Common myeloid progenitor, CD34-positive (primary cell): ENCODE measurements at regions of chr19 and their contacts with region 1.

Region 1: DNA sequence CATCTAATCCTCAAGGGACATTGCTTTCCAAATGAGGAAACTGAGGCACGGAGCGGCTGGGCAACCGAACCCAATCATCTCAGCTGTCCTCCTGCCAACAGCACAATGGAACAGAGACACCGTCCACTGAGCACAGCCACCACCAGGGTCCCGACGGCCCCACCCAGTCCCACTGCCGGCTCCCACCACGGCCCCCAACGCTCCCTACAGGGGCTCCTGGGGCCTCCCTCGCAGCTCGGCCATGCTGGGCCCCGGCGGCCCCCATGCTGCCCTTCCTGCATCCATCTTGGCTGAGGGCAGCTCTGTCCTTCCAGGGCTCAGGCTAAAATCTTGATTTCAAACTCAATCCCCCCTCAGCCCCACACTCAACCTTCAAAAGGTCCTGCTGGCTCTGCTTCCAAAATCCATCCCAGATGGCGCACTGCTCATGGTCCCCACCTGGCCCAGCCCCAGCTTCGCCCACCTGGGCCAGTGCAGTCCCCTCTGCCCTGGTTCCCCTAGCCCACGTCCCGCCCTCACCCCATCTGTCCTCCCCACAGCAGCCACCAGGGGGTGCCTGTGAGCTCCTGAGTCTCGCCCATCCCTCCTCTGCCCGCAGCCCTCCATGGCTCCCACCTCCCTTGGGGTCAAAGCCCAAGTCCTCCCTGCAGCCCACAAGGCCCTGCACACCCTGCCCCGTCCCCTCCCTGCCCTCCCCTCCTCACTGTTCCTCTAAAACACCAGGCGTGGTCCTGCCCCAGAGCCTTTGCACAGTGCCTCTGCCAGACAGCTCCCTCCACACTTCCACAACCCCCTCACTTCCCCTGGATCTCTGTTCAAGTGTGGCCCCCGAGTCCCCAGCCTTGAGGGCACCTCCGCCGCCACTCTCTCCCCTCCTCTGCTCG is 7.9 kb downstream of the PIP5K1C start:
- DNase-seq: peak in 1 of 3 donors; percentile 40
- H3K4me3 ChIP-seq: no peak overlapping the region
- H3K27ac ChIP-seq: no peak overlapping the region
- H3K4me1 ChIP-seq: peaks cover 0 to 34% (median 19%) of the 10 kb centered on the region in 4 experiments
- H3K27me3 ChIP-seq: no peaks in the 10 kb centered on the region

Region 2: DNA sequence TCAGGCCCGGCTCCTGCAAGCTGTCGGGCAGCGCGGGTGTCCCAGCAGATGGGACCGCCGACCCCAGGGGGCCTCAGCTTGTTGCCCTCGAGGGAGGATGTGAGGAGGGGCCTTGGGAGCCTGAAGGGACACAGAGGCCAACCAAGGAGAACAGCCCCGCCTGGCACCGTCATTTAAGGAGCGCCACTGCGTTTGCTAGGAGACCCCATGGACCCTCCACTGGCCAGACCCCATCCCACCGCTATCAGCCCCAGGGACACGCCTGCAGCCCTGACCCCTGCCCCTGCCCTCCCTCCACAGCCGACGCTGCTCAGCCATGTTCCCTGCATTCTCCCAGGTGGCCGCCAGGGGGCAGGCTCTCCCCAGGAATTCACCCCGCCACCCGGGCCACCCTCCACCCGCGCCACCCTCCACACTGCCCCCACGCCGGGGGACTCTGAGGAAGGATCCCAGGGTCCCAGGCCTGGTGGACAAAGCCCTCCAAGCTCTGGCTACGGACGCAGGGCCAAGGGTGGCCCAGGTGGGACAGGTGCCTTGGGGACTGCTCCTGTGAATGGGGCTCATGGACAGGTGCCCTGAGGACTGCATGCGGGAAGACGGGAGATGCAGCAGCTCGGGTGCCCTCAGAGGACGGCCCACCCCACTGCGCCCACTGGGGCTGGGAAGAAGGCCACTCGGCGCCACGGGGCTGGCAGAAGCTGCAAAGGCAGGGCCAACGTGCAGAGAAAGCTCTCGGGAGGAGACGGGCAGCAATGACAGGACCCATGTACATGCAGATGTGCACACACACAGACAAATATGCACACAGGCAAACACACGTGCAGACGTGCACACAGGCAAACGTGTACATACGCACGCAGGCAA is 26.5 kb before region 1 on chr19:
- CTCF ChIA-PET with region 1: interaction called, 27 read pairs
- POLR2A ChIA-PET with region 1: interaction called, 4 read pairs
- DNase-seq: peak; percentile 30 to 58 (median 52)
- H3K4me3 ChIP-seq: no peak overlapping the region
- H3K27ac ChIP-seq: no peak overlapping the region
- H3K4me1 ChIP-seq: peaks cover 0 to 32% (median 24%) of the 10 kb centered on the region in 4 experiments
- H3K27me3 ChIP-seq: no peaks in the 10 kb centered on the region

Region 3: GRCh38 chr19:3708208-3708931 is 16.0 kb after region 1 on chr19 and contains the start of gene TJP3:
- CTCF ChIA-PET with region 1: interaction called, 10 read pairs
- POLR2A ChIA-PET with region 1: no interaction called
- DNase-seq: peak in 1 of 3 donors; percentile 34
- H3K4me3 ChIP-seq: no peak within 1 kb of the TSS
- H3K27ac ChIP-seq: no peak within 1 kb of the TSS
- H3K4me1 ChIP-seq: peaks cover 0 to 21% (median 16%) of the 10 kb centered on the region in 4 experiments
- H3K27me3 ChIP-seq: peaks cover 0 to 3% (median 0%) of the 10 kb centered on the region in 5 experiments